ENCODE measurements at regions of chr13 and their contacts with region 1.

Region 1: GRCh38 chr13:41652727-41653361 is 195.5 kb downstream of the RGCC start:
- DNase-seq: no peak
- H3K4me3 ChIP-seq: no peak overlapping the region
- H3K27ac ChIP-seq: peak overlapping the region in 1 of 2 donors; percentile 40
- H3K4me1 ChIP-seq: peaks cover 0 to 14% of the 10 kb centered on the region in 2 donors
- H3K27me3 ChIP-seq: no peaks in the 10 kb centered on the region
- CTCF ChIP-seq: peak; percentile 49 to 70 (median 64)

Region 2: GRCh38 chr13:41352935-41353840 is 299.7 kb before region 1 on chr13:
- intact Hi-C with region 1: loop called (anchors 1 kb)
- DNase-seq: no peak
- H3K4me3 ChIP-seq: no peak overlapping the region
- H3K27ac ChIP-seq: no peak overlapping the region
- H3K4me1 ChIP-seq: no peaks in the 10 kb centered on the region
- H3K27me3 ChIP-seq: no peaks in the 10 kb centered on the region
- CTCF ChIP-seq: peak; percentile 28 to 83 (median 81)

Region 3: GRCh38 chr13:41413872-41414271 is 239.0 kb before region 1 on chr13:
- intact Hi-C with region 1: loop called (anchors 2 kb)
- DNase-seq: no peak
- H3K4me3 ChIP-seq: no peak overlapping the region
- H3K27ac ChIP-seq: no peak overlapping the region
- H3K4me1 ChIP-seq: no peaks in the 10 kb centered on the region
- H3K27me3 ChIP-seq: no peaks in the 10 kb centered on the region
- CTCF ChIP-seq: no peak

Region 4: DNA sequence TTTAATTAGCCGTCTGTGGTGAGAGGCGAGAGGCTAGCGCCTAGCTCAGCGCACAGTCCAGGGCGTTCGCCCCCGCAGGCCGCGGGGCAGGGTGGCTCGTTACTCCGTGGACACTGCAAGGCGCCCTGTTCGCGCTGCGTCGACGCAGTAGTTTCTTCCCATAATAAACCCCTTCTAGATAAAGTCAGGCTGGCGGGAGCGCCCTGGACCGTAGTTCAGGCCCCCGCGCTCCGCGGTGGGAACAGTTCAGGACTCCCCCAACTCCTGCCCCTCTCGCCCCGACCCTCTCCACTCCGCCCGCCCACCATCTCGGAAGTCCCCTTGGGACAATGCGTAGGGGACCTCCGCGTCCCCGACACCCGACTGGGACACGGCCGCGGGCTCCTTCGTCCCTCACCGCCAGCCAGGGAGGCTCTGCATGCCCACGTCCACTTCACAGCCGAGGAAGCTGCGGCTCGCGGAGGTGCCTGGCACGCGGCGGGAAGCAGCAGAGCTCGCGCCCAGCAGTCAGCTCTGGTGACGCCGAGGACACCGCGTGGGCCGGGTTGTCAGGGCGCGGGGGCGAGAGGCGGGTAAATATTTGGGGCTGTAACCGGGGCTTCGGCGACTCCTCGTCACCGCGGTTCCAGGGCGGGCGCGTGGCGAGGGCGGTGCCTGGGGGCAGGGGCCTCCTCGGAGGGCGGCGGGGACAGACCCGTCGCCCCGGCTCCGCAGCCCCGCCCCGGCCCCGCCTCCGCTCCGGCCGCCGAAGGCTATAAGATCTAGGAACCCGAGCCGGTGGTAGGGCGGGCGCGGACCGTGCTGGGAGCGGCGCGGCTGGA is 195.9 kb before region 1 on chr13 and contains the start of gene RGCC:
- intact Hi-C with region 1: loop called (anchors 2 kb)
- DNase-seq: peak; percentile 70 to 94
- H3K4me3 ChIP-seq: peak within 1 kb of the TSS; percentile 80 to 99
- H3K27ac ChIP-seq: peak within 1 kb of the TSS; percentile 61 to 78
- H3K4me1 ChIP-seq: peaks cover 0 to 18% of the 10 kb centered on the region in 2 donors
- H3K27me3 ChIP-seq: no peaks in the 10 kb centered on the region
- CTCF ChIP-seq: no peak
- total RNA-seq, gene RGCC: 184 TPM

Region 5: GRCh38 chr13:41520016-41520659 is 132.7 kb before region 1 on chr13:
- intact Hi-C with region 1: no loop called
- DNase-seq: no peak
- H3K4me3 ChIP-seq: no peak overlapping the region
- H3K27ac ChIP-seq: no peak overlapping the region
- H3K4me1 ChIP-seq: no peaks in the 10 kb centered on the region
- H3K27me3 ChIP-seq: no peaks in the 10 kb centered on the region
- CTCF ChIP-seq: no peak

Region 6: GRCh38 chr13:41577436-41577835 is 75.4 kb before region 1 on chr13:
- intact Hi-C with region 1: loop called (anchors 5 kb)
- DNase-seq: peak; percentile 31 to 78
- H3K4me3 ChIP-seq: no peak overlapping the region
- H3K27ac ChIP-seq: peak overlapping the region in 1 of 2 donors; percentile 35
- H3K4me1 ChIP-seq: peaks cover 0 to 3% of the 10 kb centered on the region in 2 donors
- H3K27me3 ChIP-seq: no peaks in the 10 kb centered on the region
- CTCF ChIP-seq: no peak

Region 7: DNA sequence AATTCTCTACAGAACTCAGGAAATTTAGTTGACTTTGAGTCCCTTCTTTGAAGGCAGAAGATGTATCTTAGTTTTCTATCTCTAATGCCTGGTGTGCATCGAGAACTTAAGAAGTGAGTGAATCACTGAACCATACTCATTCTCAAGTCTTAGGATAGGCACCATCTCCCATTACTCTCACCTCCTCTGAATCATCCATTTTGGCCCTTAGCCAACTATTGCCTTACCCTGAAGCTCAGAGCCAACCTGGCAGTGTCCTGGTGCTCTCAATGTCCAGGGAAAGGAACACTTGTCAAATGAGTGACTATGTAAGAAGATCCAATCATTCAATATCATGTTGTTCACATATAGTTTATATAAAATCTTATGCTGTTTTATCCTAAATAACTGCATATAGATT is 48.9 kb before region 1 on chr13:
- intact Hi-C with region 1: loop called (anchors 5 kb)
- DNase-seq: no peak
- H3K4me3 ChIP-seq: no peak overlapping the region
- H3K27ac ChIP-seq: no peak overlapping the region
- H3K4me1 ChIP-seq: peaks cover 0 to 8% of the 10 kb centered on the region in 2 donors
- H3K27me3 ChIP-seq: no peaks in the 10 kb centered on the region
- CTCF ChIP-seq: no peak

Measured in ascending aorta (tissue), 2 donors.